ENCODE measurements at regions of chr1 and their contacts with region 1.

Region 1: DNA sequence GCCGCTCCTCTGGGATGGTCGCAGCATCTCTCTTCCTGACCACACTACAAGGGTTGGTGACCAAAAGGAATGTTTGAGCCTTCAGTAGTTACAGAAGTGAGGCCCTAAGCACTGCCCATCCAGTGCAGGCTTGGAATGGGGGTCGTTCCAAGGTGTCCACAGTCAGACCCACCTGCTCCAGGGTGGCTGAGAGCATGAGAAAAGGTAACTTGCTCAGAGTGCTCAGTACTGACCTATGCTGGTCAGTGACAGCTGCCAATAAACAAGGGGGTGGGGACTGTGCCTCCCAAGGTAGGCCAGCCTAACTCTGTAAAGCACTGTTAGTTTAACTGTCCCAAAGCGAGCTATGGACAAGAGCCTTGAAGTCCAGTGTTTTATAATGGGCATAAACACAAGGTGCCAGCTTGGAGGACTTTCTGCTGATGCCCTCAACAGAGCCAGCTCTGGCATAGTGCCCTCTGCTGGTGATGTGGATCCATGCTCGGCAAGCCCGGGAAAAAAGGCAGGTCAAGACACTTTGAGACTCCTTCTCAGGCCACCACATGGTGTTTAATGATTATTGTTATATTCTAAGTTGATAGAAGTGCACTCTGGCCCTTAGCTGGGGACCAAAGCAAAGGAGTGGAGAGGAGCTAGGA is 78.1 kb upstream of the DNAH14 start:
- DNase-seq: peak; percentile 83

Region 2: GRCh38 chr1:224513787-224514209 is 337.5 kb before region 1 on chr1:
- intact Hi-C with region 1: loop called (anchors 5 kb)
- DNase-seq: peak; percentile 95

Region 3: DNA sequence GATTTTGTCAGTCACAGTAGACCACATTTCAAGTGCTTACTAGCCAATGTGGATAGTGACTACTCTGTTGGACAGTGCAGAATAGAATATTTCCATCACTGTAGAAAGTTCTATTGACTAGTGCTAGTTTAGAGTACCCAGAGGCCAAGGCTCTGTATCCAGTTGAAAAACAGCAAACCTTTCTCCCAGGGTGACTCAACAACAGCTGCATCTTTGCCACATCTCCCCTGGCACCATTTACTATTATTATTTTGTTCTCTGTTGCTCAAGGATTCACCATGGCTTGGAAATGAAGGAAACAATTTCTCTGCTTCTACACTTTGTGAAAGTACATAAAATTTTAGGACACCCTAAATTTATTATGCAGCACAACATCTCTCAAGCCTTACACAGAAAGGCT is 331.5 kb before region 1 on chr1:
- intact Hi-C with region 1: loop called in 1 of 2 experiments (anchors 5 kb)
- DNase-seq: no peak

Region 4: DNA sequence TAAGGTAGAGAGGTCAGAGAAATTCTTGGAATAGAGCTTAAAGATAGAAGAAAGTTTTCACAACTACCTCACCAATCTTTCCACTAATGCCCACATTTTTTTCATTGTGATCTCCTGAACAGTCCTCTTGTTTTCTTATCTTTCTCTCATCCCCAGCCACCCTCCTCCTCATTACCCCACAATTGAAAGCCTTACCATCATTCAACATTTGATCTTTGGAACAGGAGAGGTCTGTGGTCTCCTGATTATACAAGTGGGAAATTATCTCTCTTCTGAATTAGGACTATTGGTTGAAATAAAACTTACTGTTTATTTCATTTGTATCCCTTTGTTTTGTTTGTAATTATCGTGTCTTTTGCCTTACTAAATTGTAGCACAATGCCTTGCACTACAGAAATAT is 107.8 kb after region 1 on chr1:
- intact Hi-C with region 1: no loop called
- DNase-seq: no peak